ENCODE measurements at regions of chr15 and their contacts with region 1.

Region 1: GRCh38 chr15:95326431-95327182 is 1003.9 kb upstream of the NR2F2 start:
- DNase-seq: no peak

Region 2: DNA sequence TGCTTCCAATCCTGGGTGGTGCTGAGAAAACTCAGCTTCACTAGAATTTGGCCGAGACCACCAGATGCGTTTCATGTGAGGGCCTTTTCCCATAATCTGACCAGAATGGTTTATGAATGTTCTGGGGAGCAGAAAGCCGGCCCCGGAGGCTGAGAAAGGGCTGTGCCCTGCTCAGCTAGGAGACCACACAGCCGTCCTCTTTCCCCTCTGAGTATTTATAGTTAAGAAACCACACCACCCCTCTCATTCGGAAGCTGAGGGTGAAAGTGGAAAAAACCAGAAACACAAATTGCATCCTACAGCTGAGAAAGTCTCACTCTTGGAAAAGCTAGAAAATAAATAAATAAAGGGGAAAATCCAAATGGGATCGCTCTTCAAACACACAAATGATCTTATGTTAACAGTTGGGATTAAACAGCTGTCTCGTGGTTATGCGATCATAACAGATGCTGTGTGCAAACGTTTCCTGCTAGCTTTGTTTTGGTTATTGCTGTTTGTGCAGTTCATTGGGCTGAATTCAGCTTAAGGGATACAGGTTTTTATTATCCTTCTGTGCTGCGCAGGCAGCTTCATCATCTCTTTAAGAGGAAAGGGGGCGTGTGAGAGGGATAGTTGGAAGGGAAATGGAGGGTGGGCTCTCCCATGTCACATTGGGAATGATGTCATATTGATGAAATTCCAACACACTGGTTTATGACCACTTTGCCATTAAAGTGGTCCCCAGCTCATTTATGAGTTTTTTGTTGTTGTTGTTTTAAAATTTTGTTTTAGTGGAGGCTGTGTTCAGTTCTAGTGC is 22.3 kb before region 1 on chr15:
- intact Hi-C with region 1: no loop called
- DNase-seq: no peak

Region 3: GRCh38 chr15:95439922-95440376 is 113.3 kb after region 1 on chr15:
- intact Hi-C with region 1: loop called (anchors 5 kb)
- DNase-seq: no peak

Region 4: GRCh38 chr15:95590533-95591044 is 264.0 kb after region 1 on chr15:
- intact Hi-C with region 1: no loop called
- DNase-seq: no peak

Measured in cardiac septum (tissue), 1 donor.